CD4-positive, alpha-beta T cell (primary cell): ENCODE measurements at regions of chr2 and their contacts with region 1.

Region 1: DNA sequence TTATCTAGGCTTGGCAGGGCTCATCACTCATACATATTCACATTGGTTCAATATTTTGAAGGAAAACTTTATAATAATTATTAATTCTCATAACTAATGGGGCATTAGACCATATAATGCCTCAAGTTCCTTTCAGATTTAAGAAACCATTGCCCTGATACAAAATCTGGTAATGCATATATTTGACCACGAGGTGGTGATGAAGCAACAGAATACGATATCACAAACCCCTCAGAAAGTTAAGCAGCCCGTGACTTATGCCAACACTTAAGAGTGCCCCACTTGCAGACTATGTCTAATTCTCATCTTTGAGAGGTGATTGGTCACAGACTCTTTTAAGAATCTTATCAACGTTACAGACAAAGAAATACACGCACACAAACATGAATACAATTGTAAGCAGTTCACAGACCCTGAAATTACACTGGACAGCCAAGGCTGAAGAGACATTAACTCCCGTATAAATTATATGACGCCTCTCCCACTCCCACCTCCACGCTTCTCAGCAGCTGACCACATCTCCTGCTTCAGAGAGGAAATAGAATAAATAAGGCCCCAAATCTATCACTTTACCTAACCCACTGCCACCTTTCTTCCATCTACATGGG is 20.7 kb upstream of the DNAH6 start:
- DNase-seq: peak in 9 of 14 experiments; percentile 5 to 86 (median 26)
- ATAC-seq: peak; percentile 98
- H3K4me3 ChIP-seq: no peak overlapping the region
- H3K4me3 Mint-ChIP-seq: no peak overlapping the region
- H3K27ac ChIP-seq: no peak overlapping the region
- H3K27ac Mint-ChIP-seq: peak overlapping the region; percentile 5
- H3K4me1 ChIP-seq: peaks cover 4% of the 10 kb centered on the region
- H3K4me1 Mint-ChIP-seq: peaks cover 27% of the 10 kb centered on the region
- H3K27me3 ChIP-seq: no peaks in the 10 kb centered on the region
- H3K27me3 Mint-ChIP-seq: no peaks in the 10 kb centered on the region
- CTCF ChIP-seq: peak; percentile 77

Region 2: GRCh38 chr2:84631047-84631446 is 135.4 kb after region 1 on chr2:
- CTCF ChIA-PET with region 1: interaction called, 9 read pairs
- POLR2A ChIA-PET with region 1: no interaction called
- intact Hi-C with region 1: loop called (anchors 1 kb)
- DNase-seq: peak in 3 of 14 experiments; percentile 62 to 68 (median 64)
- ATAC-seq: peak; percentile 70
- H3K4me3 ChIP-seq: no peak overlapping the region
- H3K4me3 Mint-ChIP-seq: no peak overlapping the region
- H3K27ac ChIP-seq: no peak overlapping the region
- H3K27ac Mint-ChIP-seq: no peak overlapping the region
- H3K4me1 ChIP-seq: peaks cover 10% of the 10 kb centered on the region
- H3K4me1 Mint-ChIP-seq: peaks cover 48% of the 10 kb centered on the region
- H3K27me3 ChIP-seq: no peaks in the 10 kb centered on the region
- H3K27me3 Mint-ChIP-seq: no peaks in the 10 kb centered on the region
- CTCF ChIP-seq: peak; percentile 67

Region 3: GRCh38 chr2:84741296-84741765 is 245.7 kb after region 1 on chr2:
- CTCF ChIA-PET with region 1: no interaction called
- POLR2A ChIA-PET with region 1: no interaction called
- intact Hi-C with region 1: loop called in 1 of 2 experiments (anchors 5 kb)
- DNase-seq: peak; percentile 7 to 85 (median 27)
- ATAC-seq: peak; percentile 91
- H3K4me3 ChIP-seq: no peak overlapping the region
- H3K4me3 Mint-ChIP-seq: no peak overlapping the region
- H3K27ac ChIP-seq: no peak overlapping the region
- H3K27ac Mint-ChIP-seq: peak overlapping the region; percentile 16
- H3K4me1 ChIP-seq: peaks cover 17% of the 10 kb centered on the region
- H3K4me1 Mint-ChIP-seq: peaks cover 56% of the 10 kb centered on the region
- H3K27me3 ChIP-seq: no peaks in the 10 kb centered on the region
- H3K27me3 Mint-ChIP-seq: no peaks in the 10 kb centered on the region
- CTCF ChIP-seq: peak; percentile 52

Region 4: DNA sequence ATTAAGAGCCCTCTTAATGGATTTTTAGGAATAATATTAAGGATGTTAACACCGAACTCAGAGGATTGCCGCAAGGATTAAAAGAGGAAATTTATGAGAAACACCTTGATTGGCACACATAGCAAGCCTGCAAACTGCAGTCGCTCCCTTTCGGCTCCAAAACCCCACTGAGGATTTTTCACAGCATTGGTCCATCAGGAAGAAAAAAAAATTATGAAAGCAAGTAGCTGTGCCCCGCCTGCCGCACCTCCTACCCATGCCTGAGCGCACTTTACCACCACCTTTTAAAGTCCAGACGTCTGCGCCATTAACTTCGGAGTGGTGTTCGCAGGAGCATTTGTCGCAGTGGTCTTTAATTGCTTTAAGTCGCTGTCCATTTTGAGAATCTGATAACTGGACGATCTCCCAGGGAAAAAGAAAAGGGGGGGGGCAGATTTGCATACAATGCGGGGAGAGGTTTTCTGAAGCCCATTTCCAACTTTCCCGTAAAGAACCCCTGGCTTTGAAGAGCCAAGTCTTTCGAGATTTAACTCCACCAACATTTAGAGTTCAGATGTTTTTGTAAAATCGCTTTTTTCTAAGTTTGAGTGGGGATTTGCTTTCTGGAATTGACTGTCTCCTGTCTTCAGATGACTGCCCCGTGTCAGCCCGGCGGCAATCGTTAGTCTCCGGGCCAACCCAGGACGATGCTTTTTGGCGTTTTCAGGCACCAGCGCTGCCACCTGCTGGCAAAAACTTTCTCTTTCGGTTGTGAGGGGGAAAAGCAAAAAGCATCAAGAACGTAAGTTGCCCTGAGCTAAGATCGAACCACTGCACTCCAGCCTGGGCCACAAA is 386.2 kb after region 1 on chr2:
- CTCF ChIA-PET with region 1: interaction called, 5 read pairs
- POLR2A ChIA-PET with region 1: interaction called, 10 read pairs
- intact Hi-C with region 1: loop called (anchors 1 kb)
- DNase-seq: peak; percentile 79 to 92 (median 86)
- ATAC-seq: peak; percentile 66
- H3K4me3 ChIP-seq: peak overlapping the region; percentile 91
- H3K4me3 Mint-ChIP-seq: peak overlapping the region; percentile 98
- H3K27ac ChIP-seq: peak overlapping the region; percentile 64 to 79
- H3K27ac Mint-ChIP-seq: peak overlapping the region; percentile 92
- H3K4me1 ChIP-seq: peaks cover 35% of the 10 kb centered on the region
- H3K4me1 Mint-ChIP-seq: peaks cover 55% of the 10 kb centered on the region
- H3K27me3 ChIP-seq: no peaks in the 10 kb centered on the region
- H3K27me3 Mint-ChIP-seq: no peaks in the 10 kb centered on the region
- CTCF ChIP-seq: peak; percentile 79

Region 5: GRCh38 chr2:85011747-85012146 is 516.1 kb after region 1 on chr2:
- CTCF ChIA-PET with region 1: no interaction called
- POLR2A ChIA-PET with region 1: no interaction called
- intact Hi-C with region 1: loop called (anchors 1 to 5 kb)
- DNase-seq: peak in 1 of 14 experiments; percentile 27
- ATAC-seq: no peak
- H3K4me3 ChIP-seq: no peak overlapping the region
- H3K4me3 Mint-ChIP-seq: no peak overlapping the region
- H3K27ac ChIP-seq: no peak overlapping the region
- H3K27ac Mint-ChIP-seq: peak overlapping the region; percentile 22
- H3K4me1 ChIP-seq: peaks cover 28% of the 10 kb centered on the region
- H3K4me1 Mint-ChIP-seq: peaks cover 88% of the 10 kb centered on the region
- H3K27me3 ChIP-seq: no peaks in the 10 kb centered on the region
- H3K27me3 Mint-ChIP-seq: no peaks in the 10 kb centered on the region
- CTCF ChIP-seq: no peak

Region 6: GRCh38 chr2:85017411-85018048 is 521.9 kb after region 1 on chr2:
- CTCF ChIA-PET with region 1: no interaction called
- POLR2A ChIA-PET with region 1: no interaction called
- intact Hi-C with region 1: loop called (anchors 1 to 5 kb)
- DNase-seq: peak in 3 of 14 experiments; percentile 34 to 40 (median 40)
- ATAC-seq: peak; percentile 39
- H3K4me3 ChIP-seq: no peak overlapping the region
- H3K4me3 Mint-ChIP-seq: peak overlapping the region; percentile 67
- H3K27ac ChIP-seq: peak overlapping the region in 1 of 2 donors; percentile 12
- H3K27ac Mint-ChIP-seq: peak overlapping the region; percentile 73
- H3K4me1 ChIP-seq: peaks cover 4% of the 10 kb centered on the region
- H3K4me1 Mint-ChIP-seq: peaks cover 77% of the 10 kb centered on the region
- H3K27me3 ChIP-seq: no peaks in the 10 kb centered on the region
- H3K27me3 Mint-ChIP-seq: no peaks in the 10 kb centered on the region
- CTCF ChIP-seq: peak; percentile 65

Region 7: DNA sequence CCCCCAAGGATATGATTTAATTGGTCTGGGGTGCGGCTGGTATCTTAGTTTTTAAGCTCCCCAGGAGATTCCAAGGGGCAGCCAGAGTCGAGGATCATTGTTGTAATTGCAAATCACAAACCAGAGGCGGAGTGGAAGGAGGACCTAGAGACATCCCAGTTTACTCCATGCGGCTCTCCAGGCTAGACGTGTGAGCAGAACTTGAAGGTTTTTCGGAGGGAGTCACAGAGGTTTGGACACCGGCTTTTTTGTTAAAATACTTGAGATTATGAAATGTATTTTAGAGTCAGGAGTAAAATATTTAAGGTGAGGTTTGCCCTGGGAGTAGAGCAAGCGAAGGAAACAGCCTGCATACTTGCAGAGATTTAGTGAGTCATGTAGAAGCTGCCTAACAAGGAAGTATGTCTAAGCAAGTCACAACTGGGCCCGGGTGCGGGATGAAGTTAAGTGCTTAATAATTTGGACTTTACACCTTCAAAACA is 792.6 kb after region 1 on chr2:
- CTCF ChIA-PET with region 1: no interaction called
- POLR2A ChIA-PET with region 1: no interaction called
- intact Hi-C with region 1: loop called in 1 of 2 experiments (anchors 1 kb)
- DNase-seq: no peak
- ATAC-seq: no peak
- H3K4me3 ChIP-seq: no peak overlapping the region
- H3K4me3 Mint-ChIP-seq: no peak overlapping the region
- H3K27ac ChIP-seq: no peak overlapping the region
- H3K27ac Mint-ChIP-seq: no peak overlapping the region
- H3K4me1 ChIP-seq: peaks cover 24% of the 10 kb centered on the region
- H3K4me1 Mint-ChIP-seq: peaks cover 30% of the 10 kb centered on the region
- H3K27me3 ChIP-seq: no peaks in the 10 kb centered on the region
- H3K27me3 Mint-ChIP-seq: no peaks in the 10 kb centered on the region
- CTCF ChIP-seq: no peak